ENCODE measurements at regions of chr14 and their contacts with region 1.

Region 1: GRCh38 chr14:61561657-61562276 is 133.5 kb upstream of the HIF1A start:
- DNase-seq: peak; percentile 96
- H3K4me3 ChIP-seq: no peak overlapping the region
- H3K27ac ChIP-seq: peak overlapping the region; percentile 98
- H3K27me3 ChIP-seq: no peaks in the 10 kb centered on the region
- CTCF ChIP-seq: no peak

Region 2: DNA sequence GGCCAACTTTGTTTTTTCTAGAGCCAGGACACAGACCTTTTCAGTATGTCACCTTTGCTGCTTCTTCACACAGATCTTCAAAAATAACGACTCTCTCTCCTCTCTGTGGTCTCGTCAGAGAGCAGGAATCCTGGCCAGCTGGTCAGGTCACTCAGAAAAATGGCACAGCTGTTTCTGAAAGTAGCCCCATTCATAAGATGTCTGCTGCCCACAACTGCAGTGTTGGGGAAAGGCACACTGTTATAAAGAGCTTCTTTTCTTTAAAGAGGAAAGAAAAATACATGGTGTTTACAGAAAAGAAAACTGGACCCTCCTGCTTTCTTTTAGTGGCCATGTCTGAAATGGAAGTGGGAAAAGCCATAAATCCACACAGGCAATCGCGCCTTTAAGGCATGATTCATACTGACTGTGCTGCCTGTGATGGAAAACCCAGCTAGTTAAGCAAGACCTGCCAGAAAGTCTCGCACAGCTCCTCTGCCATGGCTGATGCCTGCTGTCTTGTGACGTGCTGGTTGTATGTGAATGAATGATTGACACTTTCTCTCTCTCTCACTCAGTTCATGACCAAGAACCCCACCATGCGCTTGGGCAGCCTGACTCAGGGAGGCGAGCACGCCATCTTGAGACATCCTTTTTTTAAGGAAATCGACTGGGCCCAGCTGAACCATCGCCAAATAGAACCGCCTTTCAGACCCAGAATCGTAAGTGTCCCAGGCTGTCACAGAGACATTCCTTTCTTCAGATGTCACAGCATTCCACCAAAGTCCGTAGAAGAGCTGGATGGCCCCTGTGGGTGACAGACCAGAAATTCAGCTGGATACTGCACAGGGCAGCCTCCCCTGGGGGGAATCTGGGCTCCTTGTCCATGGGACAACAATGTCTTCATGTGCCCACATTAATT is 14.3 kb before region 1 on chr14:
- CTCF ChIA-PET with region 1: interaction called, 5 read pairs
- POLR2A ChIA-PET with region 1: interaction called, 11 read pairs
- DNase-seq: no peak
- H3K4me3 ChIP-seq: no peak overlapping the region
- H3K27ac ChIP-seq: peak overlapping the region; percentile 87
- H3K27me3 ChIP-seq: no peaks in the 10 kb centered on the region
- CTCF ChIP-seq: no peak

Region 3: GRCh38 chr14:61585598-61586543 is 24.1 kb after region 1 on chr14:
- CTCF ChIA-PET with region 1: no interaction called
- POLR2A ChIA-PET with region 1: interaction called, 11 read pairs
- DNase-seq: no peak
- H3K4me3 ChIP-seq: no peak overlapping the region
- H3K27ac ChIP-seq: peak overlapping the region; percentile 97
- H3K27me3 ChIP-seq: no peaks in the 10 kb centered on the region
- CTCF ChIP-seq: no peak